ENCODE measurements at regions of chr12 and their contacts with region 1.

Region 1: DNA sequence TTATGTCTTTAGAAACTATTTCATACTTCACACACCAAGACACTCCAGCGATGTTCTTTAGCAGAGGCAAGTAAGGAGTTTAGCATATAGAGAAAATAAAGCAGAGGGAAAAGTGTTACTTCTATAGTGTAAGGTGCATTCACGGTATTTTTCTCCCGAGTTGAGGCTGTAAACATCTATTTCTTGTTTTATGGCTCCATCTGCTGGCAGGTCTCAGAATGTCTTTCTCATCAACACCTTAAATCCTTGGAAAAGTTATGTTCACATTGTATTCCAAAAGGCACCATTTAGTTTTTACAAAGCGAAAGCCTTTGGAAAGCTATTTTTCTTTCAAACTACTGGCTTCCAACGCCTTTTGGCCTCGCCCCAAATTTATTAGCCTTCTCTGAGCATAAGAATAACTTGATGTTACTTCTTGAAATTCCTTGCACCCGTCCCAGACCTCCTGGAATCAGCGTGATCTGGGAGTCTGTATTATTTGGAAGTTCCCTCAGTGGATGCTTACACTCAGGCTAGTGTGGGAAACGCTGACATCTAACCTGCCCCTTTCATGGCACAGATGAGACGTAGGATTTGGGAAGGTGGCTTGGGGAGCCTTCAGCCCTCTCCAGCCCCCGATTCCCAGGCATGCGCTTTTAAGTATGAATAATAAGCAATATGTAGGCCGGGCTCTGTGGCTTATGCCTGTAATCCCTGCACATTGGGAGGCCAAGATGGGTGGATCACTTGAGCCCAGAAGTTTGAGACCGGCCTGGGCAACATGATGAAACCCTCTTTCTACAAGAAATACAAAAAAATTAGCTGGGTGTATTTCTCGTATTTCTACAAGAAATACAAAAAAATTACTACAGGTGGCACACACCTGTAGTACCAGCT is 1.9 kb upstream of the PIWIL1 start:
- DNase-seq: peak; percentile 49
- H3K4me3 ChIP-seq: no peak overlapping the region
- H3K27ac ChIP-seq: no peak overlapping the region
- H3K4me1 ChIP-seq: no peaks in the 10 kb centered on the region
- CTCF ChIP-seq: peak; percentile 87

Region 2: DNA sequence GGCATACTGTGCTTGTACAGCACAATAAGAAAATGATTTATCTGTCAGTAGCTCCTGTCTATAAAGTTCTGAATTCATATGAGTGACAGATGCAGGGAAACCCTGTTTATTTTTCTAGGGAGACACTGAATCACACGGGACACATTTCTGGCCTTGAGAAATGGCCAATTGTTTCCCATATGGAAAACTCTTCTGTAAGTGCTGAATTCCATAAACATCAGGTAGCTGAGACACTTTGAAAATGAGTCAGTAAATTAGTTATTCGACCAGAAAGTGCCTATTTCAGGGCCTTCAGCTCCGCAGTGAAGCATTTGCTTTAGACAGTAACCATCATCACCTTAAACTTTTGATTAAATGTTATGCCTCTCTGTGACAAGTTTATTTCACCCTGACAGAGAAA is 616.3 kb before region 1 on chr12:
- CTCF ChIA-PET with region 1: no interaction called
- POLR2A ChIA-PET with region 1: no interaction called
- intact Hi-C with region 1: no loop called
- DNase-seq: no peak
- H3K4me3 ChIP-seq: no peak overlapping the region
- H3K27ac ChIP-seq: no peak overlapping the region
- H3K4me1 ChIP-seq: no peaks in the 10 kb centered on the region
- CTCF ChIP-seq: no peak

Region 3: DNA sequence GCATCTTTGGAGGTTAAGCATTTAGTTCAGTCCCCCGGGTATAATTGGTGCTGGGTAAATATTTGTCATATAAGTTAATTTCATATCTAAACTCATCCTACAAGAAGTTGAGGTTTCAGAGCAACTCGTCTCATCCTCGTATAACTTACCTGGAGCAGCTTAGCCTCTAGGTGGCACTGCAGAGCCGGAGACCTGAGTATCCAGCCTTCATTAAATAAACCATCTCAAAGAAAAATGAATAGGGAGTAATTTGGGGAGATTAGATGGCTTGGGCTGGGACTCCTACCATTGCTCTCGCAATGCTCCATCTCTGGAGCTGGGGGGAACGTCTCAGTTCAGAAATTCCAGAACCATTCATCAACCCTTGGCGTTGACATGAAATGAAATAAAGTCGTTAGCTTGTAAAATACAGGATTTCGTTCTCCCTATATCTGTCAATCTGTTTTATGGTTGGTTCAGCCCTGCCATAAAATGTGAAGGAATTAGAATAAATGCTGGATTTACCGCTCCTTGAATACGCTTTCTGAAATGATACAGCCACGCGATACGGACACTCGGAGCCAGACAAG is 309.1 kb before region 1 on chr12:
- CTCF ChIA-PET with region 1: no interaction called
- POLR2A ChIA-PET with region 1: no interaction called
- intact Hi-C with region 1: loop called (anchors 5 kb)
- DNase-seq: peak; percentile 47
- H3K4me3 ChIP-seq: no peak overlapping the region
- H3K27ac ChIP-seq: no peak overlapping the region
- H3K4me1 ChIP-seq: no peaks in the 10 kb centered on the region
- CTCF ChIP-seq: peak; percentile 89

Region 4: GRCh38 chr12:130316251-130316650 is 19.5 kb before region 1 on chr12:
- CTCF ChIA-PET with region 1: no interaction called
- POLR2A ChIA-PET with region 1: no interaction called
- intact Hi-C with region 1: no loop called
- DNase-seq: no peak
- H3K4me3 ChIP-seq: no peak overlapping the region
- H3K27ac ChIP-seq: no peak overlapping the region
- H3K4me1 ChIP-seq: no peaks in the 10 kb centered on the region
- CTCF ChIP-seq: no peak

Measured in OCI-LY7 (cell line).